Esophagus muscularis mucosa (tissue), 4 donors: ENCODE measurements at regions of chr2 and their contacts with region 1.

Region 1: DNA sequence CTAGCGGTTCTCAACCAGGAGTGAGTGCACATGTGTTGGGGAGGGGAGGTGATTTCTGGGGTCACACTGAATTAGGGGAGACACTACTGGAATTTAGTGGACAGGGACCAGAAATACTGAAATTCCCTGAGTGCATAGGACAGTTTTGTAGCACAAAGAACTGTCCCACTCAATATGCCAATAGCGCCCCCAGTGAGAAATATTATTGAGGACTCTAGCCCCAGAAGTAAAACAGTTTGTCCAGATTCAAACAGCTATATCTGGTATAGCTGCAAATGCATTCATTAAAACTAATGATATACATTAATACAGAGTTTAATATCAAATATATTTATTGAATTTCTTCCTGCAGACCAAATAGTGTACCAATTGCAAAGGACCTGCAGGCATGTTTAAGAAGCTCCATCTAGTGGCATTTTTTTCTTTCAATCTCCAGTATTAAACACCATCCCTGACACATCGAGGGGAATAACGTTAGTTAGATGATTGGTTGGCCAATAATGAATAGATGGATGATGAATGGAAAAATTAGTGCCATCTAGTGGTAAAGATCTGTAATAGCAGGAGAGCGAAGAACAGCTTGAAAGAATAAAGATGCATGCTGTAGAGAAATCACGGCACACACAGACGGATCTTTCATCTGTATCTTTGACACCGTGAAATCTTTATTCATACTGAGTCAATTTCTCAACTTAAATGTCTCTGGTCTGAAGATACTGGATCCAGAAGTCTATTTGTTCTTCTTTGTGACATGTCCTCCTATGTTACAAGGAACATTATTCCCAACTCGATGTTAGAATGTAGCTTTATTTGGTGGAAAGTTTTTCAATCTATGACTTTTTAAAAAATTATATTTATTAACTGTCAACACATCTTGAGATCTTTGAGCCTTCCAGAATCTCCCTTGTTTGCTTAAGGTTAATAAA is 62.5 kb downstream of the DHRS9 start:
- DNase-seq: no peak
- H3K4me3 ChIP-seq: no peak overlapping the region
- H3K27ac ChIP-seq: no peak overlapping the region
- H3K4me1 ChIP-seq: no peaks in the 10 kb centered on the region
- H3K27me3 ChIP-seq: no peaks in the 10 kb centered on the region
- CTCF ChIP-seq: peak; percentile 62 to 90 (median 77)
- EP300 ChIP-seq: no peak
- POLR2A ChIP-seq: no peak

Region 2: DNA sequence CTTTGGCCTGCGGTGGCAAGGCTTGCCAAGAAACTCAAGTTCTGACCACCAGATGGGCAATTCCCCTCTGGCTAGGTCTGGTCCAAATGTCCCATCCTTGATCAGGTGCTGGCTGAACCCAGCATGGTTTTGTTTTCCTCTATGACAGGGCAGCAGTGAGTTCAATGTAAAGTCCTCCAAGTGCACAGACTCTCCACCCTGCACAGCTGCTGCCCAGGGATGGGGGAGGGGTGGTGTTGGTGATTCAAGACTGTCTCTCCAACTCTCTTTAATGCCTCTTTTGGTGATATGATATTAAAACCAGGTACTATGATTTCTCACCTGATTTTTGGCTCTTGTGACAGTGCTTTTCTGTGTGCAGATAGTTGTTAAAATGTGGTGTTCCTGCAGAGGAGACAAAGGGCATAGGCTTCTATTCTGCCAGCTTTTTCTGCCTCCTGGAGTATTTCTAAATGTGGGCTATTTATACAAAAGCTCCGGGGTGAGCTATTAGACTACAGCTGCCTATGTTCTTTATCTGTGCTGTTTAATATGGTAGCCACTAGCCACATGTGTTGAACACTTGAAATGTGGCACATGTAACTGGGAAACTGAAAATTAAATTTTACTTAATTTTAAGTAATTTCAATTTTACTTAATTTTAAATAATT is 820.5 kb before region 1 on chr2:
- intact Hi-C with region 1: no loop called
- DNase-seq: no peak
- H3K4me3 ChIP-seq: no peak overlapping the region
- H3K27ac ChIP-seq: peak overlapping the region in 3 of 4 donors; percentile 54 to 69 (median 64)
- H3K4me1 ChIP-seq: peaks cover 25 to 49% (median 46%) of the 10 kb centered on the region in 4 donors
- H3K27me3 ChIP-seq: no peaks in the 10 kb centered on the region
- CTCF ChIP-seq: no peak
- EP300 ChIP-seq: no peak
- POLR2A ChIP-seq: no peak

Region 3: DNA sequence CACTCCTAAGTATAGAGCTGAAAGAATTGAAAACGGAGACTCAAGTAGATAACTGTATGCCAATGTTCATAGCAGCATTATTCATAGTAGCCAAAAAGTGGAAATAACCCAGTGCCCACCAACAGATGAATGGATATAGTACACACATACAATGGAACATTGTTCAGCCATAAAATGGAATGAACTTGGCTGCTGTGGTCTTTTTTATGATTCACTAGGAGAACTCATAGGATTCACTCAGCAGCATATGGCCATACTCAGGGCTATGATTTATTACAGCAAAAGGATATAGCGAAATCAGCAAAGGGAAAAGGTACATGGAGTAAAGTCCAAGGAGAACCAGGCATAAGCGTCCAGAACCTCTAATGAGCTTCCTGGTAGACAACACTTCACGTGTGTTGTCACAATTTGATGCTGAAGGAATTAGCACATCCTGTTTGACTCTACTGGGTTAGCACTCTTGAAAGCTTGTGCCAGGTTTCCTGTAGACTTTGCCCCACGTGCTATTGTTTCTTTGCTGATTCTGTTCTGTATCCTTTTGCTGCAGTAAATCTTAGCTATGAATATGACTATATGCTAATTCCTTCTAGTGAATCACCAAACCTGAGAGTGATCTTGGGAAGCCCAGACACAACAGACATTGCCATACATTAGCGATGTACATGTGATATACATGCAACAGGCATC is 257.3 kb before region 1 on chr2:
- intact Hi-C with region 1: no loop called
- DNase-seq: no peak
- H3K4me3 ChIP-seq: no peak overlapping the region
- H3K27ac ChIP-seq: no peak overlapping the region
- H3K4me1 ChIP-seq: no peaks in the 10 kb centered on the region
- H3K27me3 ChIP-seq: no peaks in the 10 kb centered on the region
- CTCF ChIP-seq: no peak
- EP300 ChIP-seq: no peak
- POLR2A ChIP-seq: no peak

Region 4: DNA sequence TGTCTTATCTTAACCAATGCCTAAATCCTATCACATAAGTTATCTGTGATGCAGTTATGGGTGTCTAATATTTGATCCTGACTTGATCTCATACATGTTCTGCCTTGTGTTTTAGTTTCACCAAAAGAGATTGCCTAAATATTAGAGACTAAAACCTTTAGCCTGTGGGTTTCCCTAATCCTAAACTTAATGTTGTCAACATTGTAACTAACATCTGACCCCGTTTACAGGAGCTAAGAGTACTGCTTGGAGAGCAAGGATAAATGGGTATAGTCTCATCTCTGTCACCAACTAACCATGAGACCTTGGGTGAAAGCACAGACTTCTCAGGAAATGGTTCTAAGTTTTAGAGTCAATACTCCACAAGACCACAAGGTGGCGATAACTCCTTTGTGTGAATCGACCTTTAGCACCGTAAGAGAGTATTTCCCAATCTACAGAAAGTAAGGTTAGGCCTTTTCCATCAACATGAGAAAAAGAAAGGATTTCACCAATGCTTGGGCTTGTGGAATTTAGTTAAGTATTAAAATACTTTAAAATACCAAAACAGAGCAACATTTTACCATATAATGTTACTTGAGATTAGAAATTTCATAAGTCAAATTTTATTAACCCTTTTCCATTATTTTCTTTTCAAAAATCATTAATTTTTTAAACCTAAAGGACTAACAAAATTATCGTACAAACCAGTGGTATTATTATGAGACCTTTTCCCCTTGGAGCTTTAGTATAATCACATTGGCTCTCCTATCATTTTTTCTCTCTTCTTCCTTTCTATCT is 170.2 kb before region 1 on chr2:
- intact Hi-C with region 1: loop called (anchors 2 kb)
- DNase-seq: no peak
- H3K4me3 ChIP-seq: no peak overlapping the region
- H3K27ac ChIP-seq: no peak overlapping the region
- H3K4me1 ChIP-seq: peaks cover 0 to 6% (median 3%) of the 10 kb centered on the region in 4 donors
- H3K27me3 ChIP-seq: no peaks in the 10 kb centered on the region
- CTCF ChIP-seq: peak; percentile 74 to 85 (median 76)
- EP300 ChIP-seq: no peak
- POLR2A ChIP-seq: no peak

Region 5: GRCh38 chr2:168976034-168976654 is 155.7 kb before region 1 on chr2:
- intact Hi-C with region 1: no loop called
- DNase-seq: no peak
- H3K4me3 ChIP-seq: no peak overlapping the region
- H3K27ac ChIP-seq: no peak overlapping the region
- H3K4me1 ChIP-seq: no peaks in the 10 kb centered on the region
- H3K27me3 ChIP-seq: no peaks in the 10 kb centered on the region
- CTCF ChIP-seq: no peak
- EP300 ChIP-seq: no peak
- POLR2A ChIP-seq: no peak

Region 6: GRCh38 chr2:169069341-169069740 is 62.5 kb before region 1 on chr2 and contains the start of gene DHRS9:
- intact Hi-C with region 1: no loop called
- DNase-seq: no peak
- H3K4me3 ChIP-seq: no peak within 1 kb of the TSS
- H3K27ac ChIP-seq: no peak within 1 kb of the TSS
- H3K4me1 ChIP-seq: no peaks in the 10 kb centered on the region
- H3K27me3 ChIP-seq: no peaks in the 10 kb centered on the region
- CTCF ChIP-seq: no peak
- EP300 ChIP-seq: no peak
- POLR2A ChIP-seq: no peak
- total RNA-seq, gene DHRS9: 0.75 to 0.99 (median 0.83) TPM in 3 of 4 donors, not detected in the other